B cell (primary cell): ENCODE measurements at regions of chr16 and their contacts with region 1.

Region 1: DNA sequence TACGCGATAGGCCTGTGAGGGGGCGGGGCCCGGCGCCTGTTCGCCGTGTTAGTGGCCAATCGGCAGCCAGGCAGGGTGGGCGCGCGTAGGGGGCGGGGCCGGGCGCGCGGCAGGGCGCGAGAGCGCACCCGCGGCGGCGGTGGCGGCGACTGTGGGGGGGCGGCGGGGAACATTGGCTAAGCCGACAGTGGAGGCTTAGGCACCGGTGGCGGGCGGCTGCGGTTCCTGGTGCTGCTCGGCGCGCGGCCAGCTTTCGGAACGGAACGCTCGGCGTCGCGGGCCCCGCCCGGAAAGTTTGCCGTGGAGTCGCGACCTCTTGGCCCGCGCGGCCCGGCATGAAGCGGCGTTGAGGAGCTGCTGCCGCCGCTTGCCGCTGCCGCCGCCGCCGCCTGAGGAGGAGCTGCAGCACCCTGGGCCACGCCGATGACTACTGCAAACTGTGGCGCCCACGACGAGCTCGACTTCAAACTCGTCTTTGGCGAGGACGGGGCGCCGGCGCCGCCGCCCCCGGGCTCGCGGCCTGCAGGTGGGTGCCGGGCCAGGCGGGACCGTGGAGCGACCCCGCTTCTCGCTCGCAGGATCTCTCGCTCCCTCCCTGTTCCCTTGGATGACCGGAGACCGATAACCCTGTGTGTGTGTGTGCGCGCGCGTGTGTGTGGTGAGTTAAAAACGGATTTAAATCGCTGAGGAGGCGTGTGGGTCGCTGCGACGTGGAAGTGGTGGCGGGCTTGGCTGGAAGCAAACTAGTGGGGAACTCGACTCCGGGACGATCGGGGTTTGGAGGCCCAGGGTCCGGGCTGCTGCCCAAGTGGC is at the start of gene NFATC3:
- DNase-seq: peak; percentile 99
- ATAC-seq: peak; percentile 76
- H3K4me3 ChIP-seq: peak within 1 kb of the TSS; percentile 90 to 97 (median 94)
- H3K4me3 Mint-ChIP-seq: peak within 1 kb of the TSS; percentile 86
- H3K27ac ChIP-seq: peak within 1 kb of the TSS; percentile 81 to 93
- H3K27ac Mint-ChIP-seq: peak within 1 kb of the TSS; percentile 96
- H3K4me1 ChIP-seq: peaks cover 57 to 73% of the 10 kb centered on the region in 2 donors
- H3K4me1 Mint-ChIP-seq: peaks cover 68% of the 10 kb centered on the region
- H3K27me3 ChIP-seq: no peaks in the 10 kb centered on the region
- H3K27me3 Mint-ChIP-seq: no peaks in the 10 kb centered on the region
- CTCF ChIP-seq: no peak
- total RNA-seq, gene NFATC3: 115 TPM in 2 replicates

Region 2: DNA sequence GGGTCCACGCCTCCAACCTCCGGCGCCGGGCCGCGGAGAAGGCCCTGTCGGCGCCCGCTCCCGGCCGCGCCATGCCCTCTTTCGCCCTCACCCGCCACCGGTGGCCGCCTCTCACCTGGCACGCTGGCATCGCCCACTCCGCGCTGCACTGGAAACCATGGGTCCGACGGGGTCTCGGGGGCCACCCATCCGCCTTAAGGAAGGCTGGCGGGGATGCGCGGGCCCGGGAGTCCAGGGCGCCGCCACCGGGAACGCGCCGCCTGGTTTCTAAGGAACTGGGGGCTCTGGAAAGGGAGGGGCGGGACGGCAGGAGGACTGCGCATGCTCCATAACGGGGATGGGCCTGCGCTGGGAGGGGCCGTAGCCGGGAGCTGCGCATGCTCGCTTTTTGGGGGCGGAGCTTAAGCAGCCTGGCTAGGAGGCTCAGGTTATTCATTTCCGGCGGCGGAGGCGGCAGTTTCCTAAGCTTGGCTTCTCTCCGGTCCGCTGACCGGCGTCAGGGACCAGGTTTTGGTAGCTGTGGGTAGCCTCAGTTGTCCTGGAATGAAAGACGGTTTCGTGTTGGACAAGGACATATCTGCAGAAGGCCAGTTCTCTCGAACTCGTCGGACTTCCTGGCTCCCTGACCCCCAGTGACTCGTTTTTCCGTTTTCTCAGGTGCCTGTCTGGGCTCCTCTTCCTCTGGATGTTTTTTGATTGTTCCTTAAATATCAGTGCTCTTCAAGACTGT is 366.3 kb before region 1 on chr16 and contains the start of gene GFOD2:
- CTCF ChIA-PET with region 1: no interaction called
- POLR2A ChIA-PET with region 1: no interaction called
- intact Hi-C with region 1: loop called (anchors 1 kb)
- DNase-seq: peak; percentile 97
- ATAC-seq: peak; percentile 94
- H3K4me3 ChIP-seq: peak within 1 kb of the TSS; percentile 66 to 93 (median 87)
- H3K4me3 Mint-ChIP-seq: peak within 1 kb of the TSS; percentile 99
- H3K27ac ChIP-seq: peak within 1 kb of the TSS; percentile 89 to 93
- H3K27ac Mint-ChIP-seq: peak within 1 kb of the TSS; percentile 98
- H3K4me1 ChIP-seq: peaks cover 18 to 20% of the 10 kb centered on the region in 2 donors
- H3K4me1 Mint-ChIP-seq: peaks cover 38% of the 10 kb centered on the region
- H3K27me3 ChIP-seq: no peaks in the 10 kb centered on the region
- H3K27me3 Mint-ChIP-seq: no peaks in the 10 kb centered on the region
- CTCF ChIP-seq: no peak
- total RNA-seq, gene GFOD2: 18.1 and 18.2 TPM in 2 replicates

Region 3: DNA sequence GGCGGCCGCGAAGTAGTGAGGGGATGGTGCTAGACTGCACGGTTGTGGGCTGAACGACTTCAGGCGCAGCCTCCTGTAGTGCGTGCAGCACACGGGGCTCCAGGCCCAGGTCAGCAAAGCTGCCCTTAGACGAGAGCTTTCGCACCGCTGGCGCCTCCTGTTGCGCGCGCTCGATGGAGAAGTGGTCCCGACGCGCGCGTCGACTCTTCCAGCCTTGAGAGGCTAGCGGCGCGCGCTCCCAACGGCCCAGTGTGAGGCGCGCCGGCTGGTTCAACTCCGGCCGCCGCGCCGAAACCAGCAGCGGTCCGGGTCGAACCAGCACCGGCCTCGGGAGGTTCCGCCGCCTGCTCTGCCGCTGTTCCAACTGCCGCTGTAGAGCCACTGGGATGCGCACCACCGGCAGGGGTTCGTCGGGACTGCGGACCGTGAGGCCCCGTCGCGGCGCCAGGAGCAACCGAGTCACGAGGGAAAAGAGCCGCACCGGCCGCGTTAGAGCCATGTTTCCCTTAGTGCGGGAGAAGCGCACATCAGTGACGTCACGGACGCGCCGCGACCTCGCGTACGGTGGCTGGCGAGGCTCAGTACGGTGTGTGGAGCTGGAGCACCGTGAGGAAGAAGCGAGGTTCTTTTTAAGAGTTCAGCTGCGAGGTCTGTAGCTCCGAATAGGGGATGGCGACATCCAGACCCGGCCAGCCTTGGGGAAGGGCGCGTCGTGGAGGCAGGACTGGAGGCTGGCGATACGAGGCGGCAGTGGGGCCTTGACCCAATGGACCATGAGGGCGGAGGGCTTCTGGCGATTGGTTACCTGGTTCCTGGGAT is 62.6 kb before region 1 on chr16 and contains the starts of genes DDX28 and DUS2:
- CTCF ChIA-PET with region 1: interaction called, 3 read pairs
- POLR2A ChIA-PET with region 1: interaction called, 3 read pairs
- intact Hi-C with region 1: loop called (anchors 2 kb)
- DNase-seq: peak; percentile 96
- ATAC-seq: peak; percentile 94
- H3K4me3 ChIP-seq: peak within 1 kb of the TSS; percentile 74 to 98 (median 90)
- H3K4me3 Mint-ChIP-seq: peak within 1 kb of the TSS; percentile 96
- H3K27ac ChIP-seq: peak within 1 kb of the TSS; percentile 72 to 79
- H3K27ac Mint-ChIP-seq: peak within 1 kb of the TSS; percentile 99
- H3K4me1 ChIP-seq: peaks cover 23 to 26% of the 10 kb centered on the region in 2 donors
- H3K4me1 Mint-ChIP-seq: peaks cover 27% of the 10 kb centered on the region
- H3K27me3 ChIP-seq: no peaks in the 10 kb centered on the region
- H3K27me3 Mint-ChIP-seq: no peaks in the 10 kb centered on the region
- CTCF ChIP-seq: no peak
- total RNA-seq, gene DDX28: 19.2 and 20.2 TPM in 2 replicates
- total RNA-seq, gene DUS2: 61.1 and 69.1 TPM in 2 replicates

Region 4: DNA sequence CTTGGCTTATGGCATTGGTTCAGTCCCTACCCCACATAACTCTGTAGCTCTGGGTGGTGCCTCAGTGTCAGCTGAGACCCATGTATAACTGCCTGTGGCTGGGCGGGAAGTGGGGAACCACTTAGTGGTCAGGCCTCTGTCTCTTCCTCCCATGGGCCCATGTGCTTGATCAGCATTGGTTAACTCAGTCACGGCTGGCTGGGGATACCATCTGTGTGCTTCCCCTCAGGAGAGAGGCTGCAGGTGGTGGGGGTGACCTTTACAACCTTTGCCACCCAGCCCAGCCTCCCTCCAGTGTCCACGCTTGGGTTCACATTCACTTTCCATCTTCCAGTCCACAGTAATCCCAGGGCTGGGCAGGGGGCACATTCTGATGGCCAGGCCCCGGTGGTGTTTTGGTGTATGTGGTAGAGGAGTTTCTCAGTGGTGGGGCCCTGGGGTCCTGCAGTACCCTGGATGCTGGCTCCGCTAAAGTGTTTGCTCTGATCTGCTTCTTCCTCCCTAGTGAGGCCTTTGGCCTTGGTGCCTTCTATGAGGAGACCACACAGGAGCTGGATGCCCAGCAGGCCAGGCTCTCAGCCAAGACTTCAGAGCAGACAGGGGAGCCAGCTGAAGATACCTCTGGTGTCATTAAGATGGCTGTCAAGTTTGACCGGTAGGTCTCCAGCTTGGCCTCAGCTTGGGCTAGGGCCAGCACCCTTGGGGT is 10.5 kb before region 1 on chr16:
- CTCF ChIA-PET with region 1: interaction called, 242 read pairs
- POLR2A ChIA-PET with region 1: interaction called, 82 read pairs
- intact Hi-C with region 1: loop called (anchors 1 kb)
- DNase-seq: peak; percentile 93
- ATAC-seq: peak; percentile 86
- H3K4me3 ChIP-seq: peak overlapping the region in 4 of 5 experiments; percentile 11 to 48 (median 30)
- H3K4me3 Mint-ChIP-seq: peak overlapping the region; percentile 85
- H3K27ac ChIP-seq: peak overlapping the region; percentile 77 to 91
- H3K27ac Mint-ChIP-seq: peak overlapping the region; percentile 94
- H3K4me1 ChIP-seq: peaks cover 88 to 99% of the 10 kb centered on the region in 2 donors
- H3K4me1 Mint-ChIP-seq: peaks cover 87% of the 10 kb centered on the region
- H3K27me3 ChIP-seq: no peaks in the 10 kb centered on the region
- H3K27me3 Mint-ChIP-seq: no peaks in the 10 kb centered on the region
- CTCF ChIP-seq: no peak

Region 5: GRCh38 chr16:68131813-68132706 is 46.6 kb after region 1 on chr16:
- CTCF ChIA-PET with region 1: no interaction called
- POLR2A ChIA-PET with region 1: no interaction called
- intact Hi-C with region 1: loop called (anchors 5 kb)
- DNase-seq: no peak
- ATAC-seq: no peak
- H3K4me3 ChIP-seq: no peak overlapping the region
- H3K4me3 Mint-ChIP-seq: peak overlapping the region; percentile 5
- H3K27ac ChIP-seq: peak overlapping the region; percentile 14 to 68
- H3K27ac Mint-ChIP-seq: no peak overlapping the region
- H3K4me1 ChIP-seq: peaks cover 17 to 32% of the 10 kb centered on the region in 2 donors
- H3K4me1 Mint-ChIP-seq: peaks cover 57% of the 10 kb centered on the region
- H3K27me3 ChIP-seq: no peaks in the 10 kb centered on the region
- H3K27me3 Mint-ChIP-seq: no peaks in the 10 kb centered on the region
- CTCF ChIP-seq: no peak